ENCODE measurements at regions of chr11 and their contacts with region 1.

Region 1: DNA sequence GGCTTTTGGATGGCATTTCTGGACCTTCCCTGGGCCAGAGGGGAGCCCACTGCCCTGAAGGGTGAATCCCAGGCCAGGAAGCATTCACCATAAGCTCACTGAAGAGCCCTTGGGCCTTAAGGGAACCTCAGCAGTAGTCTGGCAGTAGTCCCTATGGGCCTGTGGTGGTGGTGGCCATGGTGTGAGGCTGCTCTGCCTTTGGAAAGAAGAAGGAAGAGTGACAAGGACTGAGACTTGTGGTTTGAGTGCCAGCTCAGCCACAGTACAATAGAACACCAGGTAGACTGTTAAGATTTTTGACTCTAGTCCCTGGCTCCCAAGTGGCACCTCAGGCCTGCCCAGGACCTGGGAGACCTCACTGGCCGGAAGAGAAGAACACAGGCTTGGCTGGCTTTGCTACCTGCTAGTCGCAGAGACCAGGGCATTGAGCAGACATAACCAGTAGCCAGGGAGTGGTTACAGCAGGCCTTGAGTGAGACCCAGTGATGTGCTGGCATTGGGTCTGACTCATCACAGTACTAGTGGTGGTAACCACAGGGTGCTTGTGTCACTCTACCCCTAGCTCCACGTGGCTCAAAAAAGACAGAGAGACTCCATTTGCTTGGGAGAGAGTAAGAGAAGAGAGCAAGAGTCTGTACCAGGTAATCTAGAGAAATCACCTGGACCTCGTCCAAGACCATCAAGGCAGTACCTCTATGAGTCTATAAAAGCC is 259.8 kb upstream of the BLID start:
- DNase-seq: peak; percentile 26
- ATAC-seq: peak; percentile 81
- H3K4me3 Mint-ChIP-seq: no peak overlapping the region
- H3K27ac Mint-ChIP-seq: no peak overlapping the region
- H3K4me1 Mint-ChIP-seq: no peaks in the 10 kb centered on the region
- H3K27me3 Mint-ChIP-seq: peaks cover 13% of the 10 kb centered on the region

Region 2: DNA sequence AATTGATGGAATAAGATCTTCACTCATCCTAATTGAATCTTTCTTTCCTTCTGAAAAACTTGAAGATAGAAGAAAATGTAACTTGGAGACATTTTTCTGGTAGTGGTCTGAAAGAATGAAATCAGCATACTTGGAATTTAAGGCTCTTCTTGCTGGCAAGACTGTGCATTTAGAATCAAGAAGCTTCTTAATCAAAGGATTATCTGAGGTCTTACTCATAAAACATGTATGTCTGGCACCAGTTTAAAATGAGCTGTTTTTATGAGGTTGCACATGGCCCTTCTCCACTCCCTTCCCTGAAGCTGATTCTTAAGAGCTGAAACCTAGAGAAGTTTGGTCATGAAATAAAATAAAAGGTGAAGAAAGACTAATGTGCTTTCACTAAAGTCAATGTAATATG is 1962.4 kb before region 1 on chr11:
- CTCF ChIA-PET with region 1: no interaction called
- POLR2A ChIA-PET with region 1: interaction called, 11 read pairs
- intact Hi-C with region 1: no loop called
- DNase-seq: no peak
- ATAC-seq: no peak
- H3K4me3 Mint-ChIP-seq: no peak overlapping the region
- H3K27ac Mint-ChIP-seq: no peak overlapping the region
- H3K4me1 Mint-ChIP-seq: no peaks in the 10 kb centered on the region
- H3K27me3 Mint-ChIP-seq: no peaks in the 10 kb centered on the region